ENCODE measurements at regions of chr2 and their contacts with region 1.

Region 1: GRCh38 chr2:196291873-196292800 is 120.8 kb upstream of the STK17B start:
- DNase-seq: peak; percentile 89 to 98
- H3K4me3 ChIP-seq: peak overlapping the region; percentile 45; the same call in 1 of the 2 replicates
- H3K27ac ChIP-seq: peak overlapping the region; percentile 100
- H3K4me1 ChIP-seq: peaks cover 58% of the 10 kb centered on the region
- H3K27me3 ChIP-seq: no peaks in the 10 kb centered on the region
- CTCF ChIP-seq: no peak

Region 2: GRCh38 chr2:196076778-196077568 is 215.2 kb before region 1 on chr2:
- CTCF ChIA-PET with region 1: no interaction called
- POLR2A ChIA-PET with region 1: no interaction called
- intact Hi-C with region 1: loop called (anchors 5 kb)
- DNase-seq: no peak
- H3K4me3 ChIP-seq: no peak overlapping the region
- H3K27ac ChIP-seq: no peak overlapping the region
- H3K4me1 ChIP-seq: no peaks in the 10 kb centered on the region
- H3K27me3 ChIP-seq: no peaks in the 10 kb centered on the region
- CTCF ChIP-seq: no peak

Region 3: GRCh38 chr2:196171248-196171871 is 120.8 kb before region 1 on chr2 and contains the start of gene STK17B:
- CTCF ChIA-PET with region 1: no interaction called
- POLR2A ChIA-PET with region 1: interaction called, 6 read pairs
- intact Hi-C with region 1: loop called (anchors 1 kb)
- DNase-seq: peak; percentile 79 to 85
- H3K4me3 ChIP-seq: peak within 1 kb of the TSS; percentile 95
- H3K27ac ChIP-seq: peak within 1 kb of the TSS; percentile 77
- H3K4me1 ChIP-seq: peaks cover 40% of the 10 kb centered on the region
- H3K27me3 ChIP-seq: no peaks in the 10 kb centered on the region
- CTCF ChIP-seq: no peak
- total RNA-seq, gene STK17B: 10.8 and 14.9 TPM in 2 replicates

Region 4: DNA sequence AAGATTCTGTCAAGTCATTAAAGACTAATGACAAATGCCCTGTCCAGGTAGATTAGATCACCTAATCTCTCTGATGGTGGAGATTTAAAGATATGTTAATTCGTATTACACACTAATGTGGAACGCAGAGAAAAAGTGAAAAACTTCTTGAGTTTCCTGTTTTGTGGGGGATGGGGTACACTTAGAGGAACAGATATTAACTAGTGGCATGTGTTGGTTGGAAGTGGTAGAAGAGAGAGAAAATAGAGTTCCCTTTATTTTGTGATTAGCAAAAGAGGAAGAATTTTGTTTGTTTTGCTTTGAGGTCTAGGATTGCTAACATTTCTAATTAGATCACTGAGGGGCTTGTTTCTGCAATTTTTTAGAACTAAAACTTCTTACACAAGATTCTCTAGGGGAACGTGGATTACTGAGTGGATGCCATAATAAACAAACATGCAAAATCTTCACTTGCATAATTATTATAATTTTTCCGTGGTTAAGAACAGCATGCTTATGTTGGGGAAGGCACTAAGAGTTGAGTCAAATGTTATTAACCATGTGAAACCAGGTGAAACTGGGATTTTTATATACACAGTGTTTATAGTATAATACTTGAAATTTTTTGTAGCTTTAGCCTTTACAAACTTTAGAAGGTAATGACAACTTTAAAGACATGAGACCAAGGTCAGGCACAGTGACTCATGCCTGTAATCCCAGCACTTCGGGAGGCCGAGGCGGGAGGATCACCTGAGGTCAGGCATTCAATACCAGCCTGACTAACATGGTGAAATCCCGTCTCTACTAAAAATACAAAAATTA is 23.4 kb before region 1 on chr2:
- CTCF ChIA-PET with region 1: no interaction called
- POLR2A ChIA-PET with region 1: no interaction called
- intact Hi-C with region 1: loop called (anchors 1 kb)
- DNase-seq: peak in 1 of 2 experiments; percentile 79
- H3K4me3 ChIP-seq: no peak overlapping the region
- H3K27ac ChIP-seq: peak overlapping the region; percentile 86
- H3K4me1 ChIP-seq: peaks cover 34% of the 10 kb centered on the region
- H3K27me3 ChIP-seq: no peaks in the 10 kb centered on the region
- CTCF ChIP-seq: no peak

Region 5: DNA sequence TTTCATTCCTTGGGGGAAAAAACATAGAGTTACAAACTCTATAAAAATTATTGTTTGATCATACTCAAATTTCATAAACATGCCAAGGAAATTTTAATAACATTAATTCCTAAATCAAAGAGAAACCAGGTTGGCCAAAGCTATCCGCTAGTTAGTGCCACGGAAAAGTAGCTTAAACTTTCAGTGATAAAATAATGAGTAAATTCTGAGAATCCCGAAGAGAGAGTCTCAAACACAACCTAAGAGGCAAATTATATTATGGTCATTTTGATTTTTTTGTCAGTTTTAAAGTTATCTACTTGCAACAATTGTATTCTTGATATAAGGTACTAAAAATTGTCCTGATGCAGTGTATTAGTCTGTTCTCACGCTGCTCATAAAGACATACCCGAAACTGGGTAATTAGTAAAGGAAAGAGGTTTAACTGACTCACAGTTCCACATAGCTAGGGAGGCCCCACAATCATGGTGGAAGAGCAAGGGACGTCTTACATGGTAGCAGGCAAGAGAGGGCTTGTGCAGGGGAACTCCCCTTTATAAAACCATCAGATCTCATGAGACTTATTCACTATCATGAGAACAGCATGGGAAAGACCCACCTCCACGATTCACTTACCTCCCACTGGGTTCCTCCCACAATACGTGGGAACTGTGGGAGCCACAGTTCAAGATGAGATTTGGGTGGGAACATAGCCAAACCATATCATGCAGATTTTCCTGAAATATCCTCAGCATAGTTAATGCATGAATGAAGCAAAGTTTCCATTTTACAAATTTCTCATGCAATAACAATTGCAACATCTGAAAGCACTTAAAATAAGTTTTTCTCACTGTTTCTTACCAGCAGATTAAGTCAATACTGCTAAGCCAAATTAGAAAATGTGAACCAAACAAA is 85.1 kb after region 1 on chr2:
- CTCF ChIA-PET with region 1: no interaction called
- POLR2A ChIA-PET with region 1: no interaction called
- intact Hi-C with region 1: no loop called
- DNase-seq: no peak
- H3K4me3 ChIP-seq: no peak overlapping the region
- H3K27ac ChIP-seq: no peak overlapping the region
- H3K4me1 ChIP-seq: no peaks in the 10 kb centered on the region
- H3K27me3 ChIP-seq: no peaks in the 10 kb centered on the region
- CTCF ChIP-seq: no peak

Measured in PC-9 (cell line).